Ascending aorta (tissue), 2 donors: ENCODE measurements at regions of chr5 and their contacts with region 1.

Region 1: GRCh38 chr5:34517249-34517648 is 138.9 kb upstream of the RAI14 start:
- DNase-seq: no peak
- H3K4me3 ChIP-seq: no peak overlapping the region
- H3K27ac ChIP-seq: peak overlapping the region; percentile 81 to 85
- H3K4me1 ChIP-seq: peaks cover 0 to 26% of the 10 kb centered on the region in 2 donors
- H3K27me3 ChIP-seq: no peaks in the 10 kb centered on the region
- CTCF ChIP-seq: no peak

Region 2: DNA sequence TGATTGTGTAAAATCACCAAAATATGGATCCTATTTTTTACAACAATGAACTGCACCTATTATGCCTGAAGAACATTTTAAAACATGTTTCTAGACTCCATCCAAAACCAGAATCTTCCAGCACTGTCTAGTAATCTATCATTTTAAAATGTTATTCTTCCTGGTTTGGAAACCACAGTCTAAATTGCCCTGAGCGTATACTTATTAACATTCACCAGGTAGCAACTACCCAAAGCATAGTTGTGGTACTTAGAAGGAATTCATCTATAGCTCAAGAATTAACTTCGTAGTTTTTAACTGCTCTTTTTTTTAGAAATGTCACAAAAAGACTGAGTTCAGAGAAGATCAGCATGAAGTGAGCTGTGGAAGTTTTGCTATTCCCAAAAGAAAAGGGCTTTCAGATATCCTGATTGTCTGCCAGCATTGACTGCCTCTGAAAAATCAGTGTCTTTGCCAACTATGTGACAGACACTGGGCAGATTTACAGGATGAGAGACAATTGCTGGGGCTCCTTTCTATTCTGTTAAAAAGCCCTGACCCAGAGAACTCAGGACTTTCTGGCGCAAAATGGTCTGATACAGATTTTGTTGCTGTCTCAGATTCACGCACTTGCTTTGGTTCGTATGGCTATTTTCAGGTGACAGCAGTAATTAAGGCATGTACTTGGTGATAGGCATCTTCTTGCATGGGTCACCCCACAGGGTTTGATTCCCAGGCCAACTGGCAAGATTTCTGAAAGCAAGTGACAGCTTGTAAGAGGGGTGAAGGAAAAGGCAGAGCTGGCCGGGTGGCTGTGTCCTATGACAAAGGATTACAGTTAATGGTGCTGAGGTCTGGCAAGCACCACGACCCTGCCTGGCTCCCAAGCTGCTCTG is 13.6 kb before region 1 on chr5:
- intact Hi-C with region 1: loop called (anchors 2 kb)
- DNase-seq: no peak
- H3K4me3 ChIP-seq: no peak overlapping the region
- H3K27ac ChIP-seq: peak overlapping the region; percentile 73 to 78
- H3K4me1 ChIP-seq: peaks cover 8 to 38% of the 10 kb centered on the region in 2 donors
- H3K27me3 ChIP-seq: no peaks in the 10 kb centered on the region
- CTCF ChIP-seq: no peak